ENCODE measurements at regions of chr4 and their contacts with region 1.

Region 1: DNA sequence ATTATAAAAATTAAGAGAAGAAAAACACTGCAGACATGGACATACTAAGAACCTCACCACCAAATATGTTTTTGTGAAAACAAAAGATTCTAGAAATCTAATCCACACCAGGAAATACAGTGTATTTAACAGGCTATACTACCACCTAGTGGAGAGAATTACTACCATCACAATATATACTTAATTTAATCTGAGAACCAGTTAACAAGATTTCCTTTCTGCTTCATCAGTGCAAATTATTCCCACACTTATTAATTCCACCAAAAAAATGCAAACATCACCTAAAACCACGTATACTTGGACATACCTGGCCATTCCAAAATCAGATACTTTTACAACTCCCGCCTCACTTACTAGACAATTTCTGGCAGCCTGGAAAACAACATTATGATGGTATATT is 7.0 kb upstream of the TXK start:
- DNase-seq: peak in 3 of 10 donors; percentile 62 to 67 (median 63)
- ATAC-seq: no peak
- H3K4me3 Mint-ChIP-seq: peak overlapping the region in 1 of 10 donors; percentile 79
- H3K27ac Mint-ChIP-seq: peak overlapping the region in 5 of 10 donors; percentile 3 to 97 (median 64)
- H3K4me1 Mint-ChIP-seq: peaks cover 31 to 52% (median 50%) of the 10 kb centered on the region in 4 donors
- H3K27me3 Mint-ChIP-seq: no peaks in the 10 kb centered on the region

Region 2: GRCh38 chr4:48116582-48116981 is 24.5 kb before region 1 on chr4:
- POLR2A ChIA-PET with region 1: interaction called, 10 read pairs
- DNase-seq: no peak
- ATAC-seq: peak; percentile 29 to 42
- H3K4me3 Mint-ChIP-seq: peak overlapping the region in 7 of 10 donors; percentile 29 to 73 (median 53)
- H3K27ac Mint-ChIP-seq: peak overlapping the region; percentile 24 to 92 (median 78)
- H3K4me1 Mint-ChIP-seq: peaks cover 46 to 81% (median 79%) of the 10 kb centered on the region in 4 donors
- H3K27me3 Mint-ChIP-seq: no peaks in the 10 kb centered on the region

Region 3: GRCh38 chr4:48127682-48128394 is 13.2 kb before region 1 on chr4:
- POLR2A ChIA-PET with region 1: interaction called, 193 read pairs
- DNase-seq: peak; percentile 43 to 81 (median 68)
- ATAC-seq: peak; percentile 58 to 82
- H3K4me3 Mint-ChIP-seq: peak overlapping the region; percentile 75 to 98 (median 91)
- H3K27ac Mint-ChIP-seq: peak overlapping the region in 9 of 10 donors; percentile 90 to 98 (median 95)
- H3K4me1 Mint-ChIP-seq: peaks cover 54 to 90% (median 82%) of the 10 kb centered on the region in 4 donors
- H3K27me3 Mint-ChIP-seq: no peaks in the 10 kb centered on the region

Region 4: GRCh38 chr4:48195374-48195773 is 54.3 kb after region 1 on chr4:
- POLR2A ChIA-PET with region 1: no interaction called
- DNase-seq: no peak
- ATAC-seq: no peak
- H3K4me3 Mint-ChIP-seq: no peak overlapping the region
- H3K27ac Mint-ChIP-seq: no peak overlapping the region
- H3K4me1 Mint-ChIP-seq: peaks cover 0 to 22% (median 10%) of the 10 kb centered on the region in 4 donors
- H3K27me3 Mint-ChIP-seq: peaks cover 0 to 2% (median 0%) of the 10 kb centered on the region in 5 donors